Psoas muscle (tissue), 8 donors: ENCODE measurements at regions of chr15 and their contacts with region 1.

Region 1: GRCh38 chr15:101008158-101009139 is 89.3 kb downstream of the LRRK1 start:
- DNase-seq: peak; percentile 74 to 86
- ATAC-seq: peak; percentile 81 to 91 (median 88)
- H3K4me3 ChIP-seq: peak overlapping the region; percentile 58
- H3K27ac ChIP-seq: no peak overlapping the region
- H3K4me1 ChIP-seq: peaks cover 4% of the 10 kb centered on the region
- H3K27me3 ChIP-seq: no peaks in the 10 kb centered on the region
- CTCF ChIP-seq: peak; percentile 85

Region 2: DNA sequence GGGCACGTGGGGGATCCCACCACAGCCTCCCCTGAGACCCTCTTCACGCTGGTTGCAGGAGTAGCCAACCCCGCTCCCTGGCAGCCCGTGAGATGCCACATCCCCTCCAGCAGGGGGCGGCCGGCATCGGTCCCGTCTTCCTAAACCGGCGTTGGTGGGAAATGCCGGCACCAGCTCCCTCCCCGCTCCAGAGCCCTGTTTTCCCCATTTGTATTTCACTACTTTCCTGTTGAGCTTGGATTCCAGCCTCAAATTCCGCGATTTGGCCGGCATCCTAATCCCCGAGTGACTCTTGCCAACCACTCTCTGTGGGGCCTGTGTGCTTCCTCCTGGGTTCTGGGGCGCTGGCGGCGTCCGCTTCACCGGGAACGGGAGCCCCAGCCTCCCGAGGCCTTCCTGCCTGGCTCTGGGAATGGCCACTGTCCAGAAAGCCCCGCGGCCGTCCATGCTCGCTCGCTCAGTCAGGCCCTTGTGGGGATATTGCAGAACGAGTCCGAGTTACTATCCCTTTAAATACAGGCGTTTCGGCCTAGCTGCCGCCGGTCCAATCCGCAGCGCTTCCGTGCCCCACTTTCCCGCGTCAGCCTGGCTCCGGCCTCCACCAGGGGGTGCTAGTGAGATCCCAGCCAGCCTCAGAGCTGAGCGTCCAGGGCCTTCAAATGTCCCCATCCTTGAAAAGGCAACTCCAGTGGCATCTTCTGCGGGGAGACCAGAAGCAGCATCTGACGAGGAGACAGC is 658.6 kb before region 1 on chr15:
- intact Hi-C with region 1: loop called in 1 of 2 experiments (anchors 10 kb)
- DNase-seq: peak; percentile 94 to 97
- ATAC-seq: peak; percentile 95 to 97 (median 96)
- H3K4me3 ChIP-seq: peak overlapping the region; percentile 79
- H3K27ac ChIP-seq: peak overlapping the region; percentile 94
- H3K4me1 ChIP-seq: no peaks in the 10 kb centered on the region
- H3K27me3 ChIP-seq: no peaks in the 10 kb centered on the region
- CTCF ChIP-seq: peak; percentile 83

Region 3: DNA sequence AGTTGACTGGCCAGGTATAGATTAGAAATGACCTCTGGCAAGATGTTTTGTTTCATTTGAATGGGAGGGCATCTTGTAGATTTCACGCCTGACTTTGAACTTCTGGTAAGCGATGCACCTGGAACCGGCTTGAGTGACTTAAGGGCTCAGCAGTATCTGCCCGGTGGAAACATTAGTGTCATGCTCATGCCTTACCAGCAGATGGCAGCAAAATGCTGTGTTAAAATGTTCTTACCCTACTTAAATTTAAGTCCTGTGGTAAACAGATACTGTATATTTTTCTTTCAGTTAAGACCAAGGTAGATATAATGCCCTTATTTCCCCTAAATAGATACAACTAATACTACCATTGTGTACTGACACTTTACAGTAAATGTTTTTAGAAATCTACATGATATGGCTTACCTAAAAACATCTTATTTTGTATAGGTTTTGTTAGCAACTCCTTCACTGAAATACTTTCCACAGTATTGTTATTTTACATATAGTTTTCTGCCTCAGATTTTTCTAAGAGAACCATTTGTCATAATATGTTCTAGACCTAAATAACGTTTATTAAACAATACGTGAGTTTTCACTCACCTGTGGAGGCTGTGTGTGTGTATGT is 380.6 kb before region 1 on chr15:
- intact Hi-C with region 1: loop called (anchors 1 to 2 kb)
- DNase-seq: peak in 1 of 2 donors; percentile 20
- ATAC-seq: peak; percentile 83 to 91 (median 88)
- H3K4me3 ChIP-seq: no peak overlapping the region
- H3K27ac ChIP-seq: no peak overlapping the region
- H3K4me1 ChIP-seq: peaks cover 11% of the 10 kb centered on the region
- H3K27me3 ChIP-seq: no peaks in the 10 kb centered on the region
- CTCF ChIP-seq: peak; percentile 92

Region 4: DNA sequence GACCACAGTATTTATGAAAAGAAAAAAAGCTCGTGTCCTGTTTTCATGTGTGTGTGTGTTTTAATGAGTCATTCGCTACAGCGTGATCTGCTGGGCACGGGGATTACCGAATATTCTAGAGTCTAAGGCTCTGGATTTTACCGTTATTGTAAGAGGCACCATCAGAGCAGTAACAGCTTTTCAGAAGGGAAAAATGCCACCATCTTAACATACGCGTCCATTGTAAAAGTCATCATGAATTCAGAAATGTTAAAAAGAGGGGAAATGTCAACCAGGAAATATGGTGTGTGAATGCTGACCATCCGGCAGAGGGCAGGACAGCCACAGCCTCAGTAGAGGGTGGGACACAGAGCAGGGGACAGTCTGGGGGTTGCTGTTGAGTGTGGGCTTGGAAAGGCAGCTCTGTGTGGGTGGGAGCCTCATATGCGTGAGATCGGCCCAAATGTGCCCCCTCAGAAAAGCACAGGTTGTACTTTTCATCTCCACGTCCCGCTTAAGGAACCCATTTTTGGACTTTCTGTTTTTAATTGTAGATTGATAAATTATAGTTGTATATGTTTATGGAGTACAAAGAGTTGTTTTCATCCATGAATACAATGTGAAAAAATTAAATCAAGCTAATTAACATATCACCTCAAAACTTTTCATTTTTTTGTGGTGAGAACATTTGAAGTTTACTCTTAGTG is 336.4 kb before region 1 on chr15:
- intact Hi-C with region 1: loop called in 1 of 2 experiments (anchors 2 kb)
- DNase-seq: no peak
- ATAC-seq: peak; percentile 60 to 79 (median 64)
- H3K4me3 ChIP-seq: peak overlapping the region; percentile 13
- H3K27ac ChIP-seq: no peak overlapping the region
- H3K4me1 ChIP-seq: no peaks in the 10 kb centered on the region
- H3K27me3 ChIP-seq: peaks cover 0 to 3% (median 0%) of the 10 kb centered on the region in 3 donors
- CTCF ChIP-seq: peak; percentile 51

Region 5: GRCh38 chr15:100853676-100854440 is 154.6 kb before region 1 on chr15:
- intact Hi-C with region 1: no loop called
- DNase-seq: no peak
- ATAC-seq: no peak
- H3K4me3 ChIP-seq: no peak overlapping the region
- H3K27ac ChIP-seq: no peak overlapping the region
- H3K4me1 ChIP-seq: no peaks in the 10 kb centered on the region
- H3K27me3 ChIP-seq: peaks cover 0 to 10% (median 6%) of the 10 kb centered on the region in 3 donors
- CTCF ChIP-seq: no peak

Region 6: GRCh38 chr15:100918034-100918689 is 90.3 kb before region 1 on chr15:
- intact Hi-C with region 1: loop called (anchors 1 to 2 kb)
- DNase-seq: peak; percentile 82 to 89
- ATAC-seq: peak; percentile 85 to 95 (median 94)
- H3K4me3 ChIP-seq: peak overlapping the region; percentile 83
- H3K27ac ChIP-seq: peak overlapping the region; percentile 67
- H3K4me1 ChIP-seq: peaks cover 14% of the 10 kb centered on the region
- H3K27me3 ChIP-seq: peaks cover 0 to 14% (median 1%) of the 10 kb centered on the region in 3 donors
- CTCF ChIP-seq: peak; percentile 89

Region 7: GRCh38 chr15:101251830-101252820 is 243.7 kb after region 1 on chr15 and contains the start of gene CHSY1:
- intact Hi-C with region 1: loop called in 1 of 2 experiments (anchors 1 kb)
- DNase-seq: peak; percentile 96 to 97
- ATAC-seq: peak; percentile 90 to 94 (median 92)
- H3K4me3 ChIP-seq: peak within 1 kb of the TSS; percentile 75
- H3K27ac ChIP-seq: peak within 1 kb of the TSS; percentile 84
- H3K4me1 ChIP-seq: peaks cover 34% of the 10 kb centered on the region
- H3K27me3 ChIP-seq: no peaks in the 10 kb centered on the region
- CTCF ChIP-seq: peak; percentile 22
- total RNA-seq, gene CHSY1: 6.7 to 11.4 (median 8.5) TPM

Region 8: GRCh38 chr15:101277038-101277882 is 268.8 kb after region 1 on chr15 and contains the start of gene SELENOS:
- intact Hi-C with region 1: no loop called
- DNase-seq: peak; percentile 95 to 96
- ATAC-seq: peak; percentile 89 to 96 (median 93)
- H3K4me3 ChIP-seq: peak within 1 kb of the TSS; percentile 72
- H3K27ac ChIP-seq: peak within 1 kb of the TSS; percentile 89
- H3K4me1 ChIP-seq: peaks cover 43% of the 10 kb centered on the region
- H3K27me3 ChIP-seq: no peaks in the 10 kb centered on the region
- CTCF ChIP-seq: no peak
- total RNA-seq, gene SELENOS: 25.7 to 98.9 (median 50.4) TPM

Region 9: GRCh38 chr15:101420232-101420631 is 411.8 kb after region 1 on chr15:
- intact Hi-C with region 1: no loop called
- DNase-seq: no peak
- ATAC-seq: no peak
- H3K4me3 ChIP-seq: no peak overlapping the region
- H3K27ac ChIP-seq: no peak overlapping the region
- H3K4me1 ChIP-seq: no peaks in the 10 kb centered on the region
- H3K27me3 ChIP-seq: no peaks in the 10 kb centered on the region
- CTCF ChIP-seq: no peak